ENCODE measurements at regions of chr1 and their contacts with region 1.

Region 1: DNA sequence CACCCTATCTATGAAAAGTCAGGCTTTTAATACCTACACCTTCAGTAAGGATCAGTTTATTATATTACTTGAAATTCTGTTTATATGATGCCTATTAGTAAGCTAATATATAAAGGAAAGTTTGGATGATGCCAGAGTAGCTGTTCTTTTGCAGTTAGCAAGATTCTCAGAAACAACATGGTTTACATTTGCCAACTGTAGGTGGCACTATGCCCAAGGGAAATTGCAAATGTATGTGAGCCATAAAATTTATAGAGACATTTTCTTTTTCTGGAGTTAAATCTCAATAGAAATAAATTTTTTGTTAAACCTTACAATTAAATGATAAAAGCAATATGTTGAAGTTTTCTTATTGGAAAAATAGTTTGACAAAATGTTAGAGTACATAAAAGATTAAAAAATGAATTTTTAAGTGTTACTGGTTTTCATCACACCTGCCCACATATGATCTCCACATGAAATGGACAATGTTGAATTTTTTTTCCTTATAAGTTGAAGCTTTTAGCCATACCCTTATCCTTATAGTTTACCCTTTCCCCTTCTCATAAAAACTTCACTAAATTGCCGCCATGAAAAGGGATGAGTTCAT is 32.1 kb upstream of the EPHX4 start:
- DNase-seq: peak in 8 of 9 experiments; percentile 13 to 78 (median 43)
- ATAC-seq: no peak
- H3K4me3 ChIP-seq: no peak overlapping the region
- H3K4me3 Mint-ChIP-seq: no peak overlapping the region
- H3K27ac ChIP-seq: no peak overlapping the region
- H3K27ac Mint-ChIP-seq: no peak overlapping the region
- H3K4me1 ChIP-seq: no peaks in the 10 kb centered on the region
- H3K4me1 Mint-ChIP-seq: no peaks in the 10 kb centered on the region
- H3K27me3 ChIP-seq: no peaks in the 10 kb centered on the region
- H3K27me3 Mint-ChIP-seq: no peaks in the 10 kb centered on the region
- CTCF ChIP-seq: peak; percentile 90

Region 2: GRCh38 chr1:92291372-92291999 is 293.8 kb after region 1 on chr1:
- CTCF ChIA-PET with region 1: interaction called, 20 read pairs
- POLR2A ChIA-PET with region 1: interaction called, 3 read pairs
- intact Hi-C with region 1: loop called (anchors 1 to 2 kb)
- DNase-seq: peak in 2 of 9 experiments; percentile 44 to 53
- ATAC-seq: peak; percentile 36
- H3K4me3 ChIP-seq: no peak overlapping the region
- H3K4me3 Mint-ChIP-seq: no peak overlapping the region
- H3K27ac ChIP-seq: no peak overlapping the region
- H3K27ac Mint-ChIP-seq: no peak overlapping the region
- H3K4me1 ChIP-seq: no peaks in the 10 kb centered on the region
- H3K4me1 Mint-ChIP-seq: peaks cover 30% of the 10 kb centered on the region
- H3K27me3 ChIP-seq: no peaks in the 10 kb centered on the region
- H3K27me3 Mint-ChIP-seq: no peaks in the 10 kb centered on the region
- CTCF ChIP-seq: peak; percentile 49

Region 3: DNA sequence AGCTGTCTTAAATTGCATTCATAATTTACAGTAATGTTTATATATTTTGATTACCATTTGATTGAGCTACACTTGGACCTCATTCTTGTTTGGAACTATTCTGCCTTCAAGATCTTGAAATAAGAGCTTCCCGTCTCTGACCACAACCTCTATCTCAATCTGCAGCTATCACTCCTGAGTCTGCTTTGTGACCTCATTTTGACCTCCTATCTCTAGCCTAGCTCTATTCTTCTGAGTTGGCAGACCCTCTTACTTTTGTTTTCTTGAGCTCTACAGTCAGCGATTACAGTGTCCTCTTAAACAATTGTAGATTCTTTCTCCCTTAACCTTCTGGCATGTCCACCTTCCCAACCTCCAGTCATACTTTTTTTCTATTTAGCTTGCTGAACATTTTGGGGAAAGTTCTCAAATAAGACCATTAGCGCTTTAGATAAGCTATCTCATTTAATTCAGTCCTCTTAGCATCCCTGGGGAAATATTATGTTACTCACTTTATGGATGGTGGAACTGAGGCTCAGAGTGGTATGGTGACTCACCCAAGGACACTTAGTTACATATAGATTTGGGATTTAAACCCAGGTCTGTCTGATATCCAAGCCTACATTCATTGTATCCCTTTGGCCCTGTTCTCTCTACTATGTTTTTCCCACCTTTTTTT is 320.3 kb after region 1 on chr1:
- CTCF ChIA-PET with region 1: interaction called, 10 read pairs
- POLR2A ChIA-PET with region 1: interaction called, 4 read pairs
- intact Hi-C with region 1: loop called in 1 of 2 experiments (anchors 5 kb)
- DNase-seq: peak in 3 of 9 experiments; percentile 14 to 75 (median 62)
- ATAC-seq: peak; percentile 37
- H3K4me3 ChIP-seq: no peak overlapping the region
- H3K4me3 Mint-ChIP-seq: peak overlapping the region; percentile 64
- H3K27ac ChIP-seq: peak overlapping the region; percentile 12 to 47
- H3K27ac Mint-ChIP-seq: peak overlapping the region; percentile 91
- H3K4me1 ChIP-seq: peaks cover 58% of the 10 kb centered on the region
- H3K4me1 Mint-ChIP-seq: peaks cover 59% of the 10 kb centered on the region
- H3K27me3 ChIP-seq: no peaks in the 10 kb centered on the region
- H3K27me3 Mint-ChIP-seq: no peaks in the 10 kb centered on the region
- CTCF ChIP-seq: no peak

Region 4: DNA sequence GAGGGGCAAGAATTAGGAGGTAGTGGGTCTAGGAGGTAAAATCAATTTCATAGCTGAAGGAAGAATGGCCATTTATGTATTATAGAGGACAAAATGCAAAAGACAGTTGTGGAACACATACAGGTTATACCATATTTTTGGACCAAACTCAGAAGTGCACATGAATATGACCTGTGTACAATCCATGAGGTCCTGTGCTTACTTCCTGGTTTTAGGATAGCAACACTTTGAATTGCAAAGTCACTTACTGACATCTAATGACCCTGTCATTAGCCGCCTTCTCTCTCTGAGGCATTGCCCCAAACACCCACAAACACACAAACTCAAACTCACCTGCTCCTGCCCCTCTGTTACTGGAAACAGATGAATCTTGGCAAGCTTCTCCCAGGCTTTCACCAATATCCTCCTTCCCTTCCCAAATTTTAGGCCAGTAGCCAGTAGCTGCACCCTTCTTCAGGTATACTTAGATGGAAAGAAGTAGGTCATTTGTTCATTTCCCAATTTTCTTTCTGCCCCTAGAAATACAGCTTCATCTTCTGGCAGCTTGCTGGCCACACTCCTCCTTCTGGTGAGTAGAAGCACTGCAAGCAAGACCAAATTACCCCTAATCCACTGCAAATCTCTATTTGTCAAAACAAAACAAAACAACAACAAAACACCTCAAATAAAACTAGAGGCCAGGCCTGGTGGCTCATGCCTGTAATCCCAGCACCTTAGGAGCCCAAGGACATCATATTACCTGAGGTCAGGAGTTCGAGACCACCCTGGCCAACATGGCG is 820.5 kb after region 1 on chr1:
- CTCF ChIA-PET with region 1: no interaction called
- POLR2A ChIA-PET with region 1: no interaction called
- intact Hi-C with region 1: loop called in 1 of 2 experiments (anchors 1 kb)
- DNase-seq: peak in 3 of 9 experiments; percentile 14 to 54 (median 48)
- ATAC-seq: peak; percentile 69
- H3K4me3 ChIP-seq: no peak overlapping the region
- H3K4me3 Mint-ChIP-seq: no peak overlapping the region
- H3K27ac ChIP-seq: no peak overlapping the region
- H3K27ac Mint-ChIP-seq: no peak overlapping the region
- H3K4me1 ChIP-seq: no peaks in the 10 kb centered on the region
- H3K4me1 Mint-ChIP-seq: no peaks in the 10 kb centered on the region
- H3K27me3 ChIP-seq: peaks cover 0 to 2% of the 10 kb centered on the region in 2 experiments
- H3K27me3 Mint-ChIP-seq: peaks cover 11% of the 10 kb centered on the region
- CTCF ChIP-seq: peak; percentile 66